ENCODE measurements at regions of chr6 and their contacts with region 1.

Region 1: DNA sequence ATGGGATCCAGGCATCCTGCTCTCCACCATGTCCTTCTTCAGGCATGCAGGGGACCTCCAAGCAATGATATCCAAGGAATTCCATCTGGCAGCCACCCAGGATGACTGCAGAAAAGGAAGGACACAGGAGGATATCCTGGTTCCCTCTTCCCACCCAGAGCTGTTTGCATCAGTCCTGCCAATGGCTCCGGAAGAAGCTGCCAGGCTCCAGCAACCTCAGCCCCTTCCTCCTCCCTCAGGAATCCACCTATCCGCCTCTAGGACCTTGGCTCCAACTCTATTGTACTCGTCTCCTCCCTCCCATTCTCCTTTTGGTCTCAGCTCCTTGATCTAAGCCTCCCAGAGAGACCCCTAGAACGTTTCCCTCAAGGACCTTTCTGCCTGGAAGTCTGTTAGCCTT is 733 bp upstream of the PSORS1C2 start:
- DNase-seq: no peak
- ATAC-seq: no peak

Region 2: GRCh38 chr6:30974488-30975252 is 164.9 kb before region 1 on chr6:
- intact Hi-C with region 1: no loop called
- DNase-seq: no peak
- ATAC-seq: no peak

Region 3: DNA sequence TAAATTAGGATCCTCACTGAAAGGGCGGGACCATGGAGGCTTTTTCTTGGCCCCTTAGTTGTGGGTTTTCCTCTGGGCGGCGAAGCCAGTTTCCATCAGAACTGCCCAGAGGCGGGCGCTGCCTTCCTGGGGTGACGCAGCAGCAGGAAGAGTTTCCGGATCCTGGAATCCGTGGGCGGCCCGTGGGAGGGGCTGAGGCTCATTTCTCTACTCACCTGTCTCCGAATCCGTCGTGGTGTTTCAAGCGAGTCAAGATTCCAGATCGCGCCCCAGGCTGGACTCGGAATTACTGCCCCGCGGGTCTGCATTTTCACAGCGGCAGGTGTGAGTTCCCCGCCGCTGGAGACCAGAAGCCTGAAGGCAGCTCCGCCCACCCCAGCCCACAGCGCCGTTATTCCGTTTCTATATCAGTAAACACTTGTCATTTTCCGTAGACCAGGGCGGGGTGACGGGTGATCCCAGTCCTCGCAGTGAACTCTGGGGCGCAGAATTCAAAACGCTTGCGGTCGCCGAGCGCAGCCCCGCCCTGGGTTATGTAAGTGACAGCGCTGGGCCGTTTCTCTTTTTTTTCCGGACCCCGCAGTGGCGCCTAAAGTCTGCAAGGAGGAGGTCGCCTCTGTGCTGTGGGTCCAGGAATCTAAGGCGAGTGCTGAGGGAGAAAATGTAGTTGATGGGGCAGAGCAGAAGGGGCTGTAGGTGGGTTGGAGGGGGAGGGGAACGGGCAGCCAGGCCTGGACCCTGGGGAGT is 58.1 kb after region 1 on chr6:
- intact Hi-C with region 1: loop called (anchors 5 kb)
- DNase-seq: peak; percentile 96
- ATAC-seq: peak; percentile 92

Region 4: GRCh38 chr6:31525932-31526591 is 386.5 kb after region 1 on chr6:
- intact Hi-C with region 1: no loop called
- DNase-seq: no peak
- ATAC-seq: no peak

Measured in Right ventricle myocardium superior (tissue), 1 donor.